ENCODE measurements at regions of chr10 and their contacts with region 1.

Region 1: DNA sequence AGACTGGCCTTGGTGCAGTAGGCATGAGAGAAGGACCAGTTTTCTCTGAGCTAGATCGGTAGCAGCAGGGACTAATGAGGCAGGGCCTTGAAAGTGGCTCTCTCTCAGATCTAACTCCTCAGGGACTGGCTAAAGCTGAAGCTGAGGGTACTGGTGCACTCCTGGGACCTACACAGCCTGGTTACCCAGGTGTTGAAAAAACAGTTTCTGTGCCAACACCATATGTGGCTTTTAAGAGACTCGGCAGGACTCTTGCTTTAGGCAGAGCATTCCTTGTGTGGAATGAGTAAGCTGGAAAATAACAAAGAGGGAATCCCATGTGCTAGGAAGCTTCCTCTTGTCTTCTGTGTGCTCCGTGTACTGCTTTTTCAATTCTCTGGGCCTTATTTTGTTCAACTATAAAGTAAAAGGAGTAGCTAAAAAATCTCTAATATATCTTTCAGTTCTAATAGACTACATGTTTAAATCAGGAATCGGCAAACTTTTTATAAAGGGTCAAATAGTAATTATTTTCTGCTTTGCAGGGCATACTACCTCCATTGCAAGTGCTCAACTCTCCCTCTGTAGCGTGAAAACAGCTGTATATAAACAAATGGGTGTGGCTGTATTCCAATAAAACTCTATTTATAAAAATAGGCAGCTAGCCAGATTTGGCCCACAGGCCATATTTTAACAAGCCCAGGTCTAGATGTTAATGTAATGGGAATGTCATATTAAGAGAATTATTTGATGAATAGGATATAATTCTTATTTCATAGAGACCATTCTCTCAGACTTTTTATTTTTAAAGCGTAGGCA is 186.1 kb upstream of the KAT6B start:
- DNase-seq: peak; percentile 31
- ATAC-seq: peak; percentile 82
- H3K4me3 ChIP-seq: no peak overlapping the region
- H3K27ac ChIP-seq: no peak overlapping the region
- H3K4me1 ChIP-seq: no peaks in the 10 kb centered on the region
- H3K27me3 ChIP-seq: no peaks in the 10 kb centered on the region
- CTCF ChIP-seq: no peak
- EP300 ChIP-seq: no peak
- POLR2A ChIP-seq: no peak
- RAD21 ChIP-seq: no peak

Region 2: GRCh38 chr10:73537288-73537687 is 1103.0 kb before region 1 on chr10:
- CTCF ChIA-PET with region 1: no interaction called
- POLR2A ChIA-PET with region 1: no interaction called
- RAD21 ChIA-PET with region 1: no interaction called
- SMC1A ChIA-PET with region 1: no interaction called
- in situ Hi-C with region 1: no loop called
- intact Hi-C with region 1: no loop called
- DNase-seq: no peak
- ATAC-seq: no peak
- H3K4me3 ChIP-seq: no peak overlapping the region
- H3K27ac ChIP-seq: no peak overlapping the region
- H3K4me1 ChIP-seq: no peaks in the 10 kb centered on the region
- H3K27me3 ChIP-seq: no peaks in the 10 kb centered on the region
- CTCF ChIP-seq: no peak
- EP300 ChIP-seq: no peak
- POLR2A ChIP-seq: no peak
- RAD21 ChIP-seq: no peak

Region 3: GRCh38 chr10:74628136-74628535 is 12.2 kb before region 1 on chr10:
- CTCF ChIA-PET with region 1: interaction called, 7 read pairs
- POLR2A ChIA-PET with region 1: interaction called, 3 read pairs
- RAD21 ChIA-PET with region 1: interaction called, 4 read pairs
- SMC1A ChIA-PET with region 1: interaction called, 20 read pairs
- in situ Hi-C with region 1: no loop called
- intact Hi-C with region 1: no loop called
- DNase-seq: no peak
- ATAC-seq: no peak
- H3K4me3 ChIP-seq: no peak overlapping the region
- H3K27ac ChIP-seq: no peak overlapping the region
- H3K4me1 ChIP-seq: no peaks in the 10 kb centered on the region
- H3K27me3 ChIP-seq: no peaks in the 10 kb centered on the region
- CTCF ChIP-seq: no peak
- EP300 ChIP-seq: no peak
- POLR2A ChIP-seq: no peak
- RAD21 ChIP-seq: no peak

Measured in GM12878 (cell line).